BJ (cell line): ENCODE measurements at regions of chr18 and their contacts with region 1.

Region 1: DNA sequence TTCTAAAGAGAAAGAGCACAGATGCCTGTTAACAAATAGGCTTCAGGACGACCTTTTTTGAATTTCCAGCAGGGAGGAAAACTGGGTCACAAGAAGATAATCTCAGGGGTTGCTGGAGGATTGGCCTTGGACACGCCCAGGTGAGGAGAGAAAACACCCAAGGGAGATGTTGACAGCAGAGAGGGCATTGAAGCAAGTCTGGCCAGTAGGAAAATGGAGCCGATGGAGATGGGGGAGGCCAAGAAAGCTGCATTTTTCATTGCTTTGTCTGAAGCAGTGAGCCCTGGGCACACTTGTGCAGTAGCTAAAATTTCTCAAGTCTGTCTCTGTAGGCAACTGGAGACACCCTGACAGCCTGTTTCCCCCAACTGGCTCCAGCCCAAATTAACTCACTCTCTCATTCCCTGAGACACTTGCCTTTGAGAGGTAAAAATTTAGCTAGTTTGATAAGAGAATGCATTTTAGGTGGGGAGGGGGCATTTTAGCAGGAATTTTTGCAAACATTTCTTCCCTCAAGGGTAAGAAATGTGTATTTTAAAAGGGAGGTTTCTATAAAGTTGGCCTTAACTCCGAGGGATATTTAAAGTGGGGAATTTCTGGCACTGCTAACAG is 165.5 kb downstream of the TGIF1 start:
- DNase-seq: no peak
- H3K4me3 ChIP-seq: no peak overlapping the region
- H3K27me3 ChIP-seq: no peaks in the 10 kb centered on the region
- CTCF ChIP-seq: no peak

Region 2: DNA sequence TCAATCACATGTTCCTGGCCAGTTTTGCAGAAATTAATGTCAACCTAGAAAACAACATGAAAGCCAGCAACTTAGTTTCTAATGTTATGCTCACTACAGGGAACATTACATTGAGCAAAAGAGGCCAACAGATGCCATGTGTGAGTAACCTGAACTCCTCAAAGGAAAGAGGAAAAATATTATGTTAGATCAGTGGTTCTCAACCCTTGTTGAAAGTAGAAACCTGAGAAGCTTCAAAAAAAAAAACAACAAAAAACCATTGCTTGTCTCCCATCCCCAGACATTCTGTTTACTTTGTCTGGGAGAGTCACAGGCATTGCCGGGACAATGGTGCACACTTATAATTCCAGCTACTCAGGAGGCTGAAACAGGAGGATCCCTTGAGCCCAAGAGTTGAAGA is 1101.9 kb before region 1 on chr18:
- CTCF ChIA-PET with region 1: no interaction called
- POLR2A ChIA-PET with region 1: interaction called, 14 read pairs
- DNase-seq: no peak
- H3K4me3 ChIP-seq: no peak overlapping the region
- H3K27me3 ChIP-seq: no peaks in the 10 kb centered on the region
- CTCF ChIP-seq: no peak

Region 3: DNA sequence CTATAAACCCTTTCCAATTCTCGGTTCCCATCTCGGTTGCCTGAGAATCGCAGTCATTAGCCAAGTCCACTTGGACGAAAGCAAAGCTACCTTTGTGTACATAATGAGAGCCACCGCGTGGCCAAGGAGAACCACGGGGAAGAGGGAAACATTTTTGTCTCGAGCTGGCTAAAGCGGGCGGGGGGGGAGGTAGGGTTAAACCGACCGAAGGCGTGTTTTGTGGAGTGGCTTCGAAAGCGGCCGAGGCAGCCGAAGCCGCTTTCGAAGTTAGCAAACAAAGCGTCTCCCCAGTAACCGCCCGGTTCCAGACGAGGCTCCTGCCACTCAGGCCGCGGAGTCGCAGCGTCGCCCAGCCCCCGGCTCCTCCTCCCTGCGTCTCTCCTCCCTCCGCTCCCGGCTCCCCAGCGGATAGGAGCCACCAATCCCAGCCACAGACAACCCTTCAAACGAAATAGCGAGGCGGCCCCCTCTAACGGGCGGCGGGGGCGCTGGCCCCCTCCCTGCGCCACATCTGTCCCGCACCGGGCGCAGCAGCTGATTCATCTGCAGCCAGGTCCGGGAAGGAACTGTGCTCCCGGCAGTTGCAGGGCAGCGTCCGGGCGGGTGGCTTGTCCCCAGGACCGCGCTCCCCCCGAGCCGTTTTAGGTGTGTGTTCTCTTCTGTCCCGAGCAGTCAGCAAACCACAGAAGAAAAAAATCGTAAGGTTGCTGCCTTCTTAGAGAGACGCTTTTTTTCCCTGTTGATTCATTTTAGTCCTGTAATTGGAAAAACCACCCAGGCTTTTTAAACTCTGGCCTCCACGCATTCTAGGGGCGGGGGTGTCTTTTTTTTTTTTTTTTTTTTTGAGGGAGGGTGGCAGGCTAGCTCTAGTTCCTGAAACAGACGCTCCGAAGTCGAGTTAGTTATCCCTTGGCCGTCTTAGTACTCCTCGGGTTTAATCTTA is 167.3 kb before region 1 on chr18:
- CTCF ChIA-PET with region 1: no interaction called
- POLR2A ChIA-PET with region 1: no interaction called
- DNase-seq: peak; percentile 92
- H3K4me3 ChIP-seq: peak overlapping the region; percentile 96
- H3K27me3 ChIP-seq: no peaks in the 10 kb centered on the region
- CTCF ChIP-seq: 0 out of 2 replicates have a peak, but pooled peaks have one; percentile 13